Ascending aorta (tissue), 2 donors: ENCODE measurements at regions of chr10 and their contacts with region 1.

Region 1: DNA sequence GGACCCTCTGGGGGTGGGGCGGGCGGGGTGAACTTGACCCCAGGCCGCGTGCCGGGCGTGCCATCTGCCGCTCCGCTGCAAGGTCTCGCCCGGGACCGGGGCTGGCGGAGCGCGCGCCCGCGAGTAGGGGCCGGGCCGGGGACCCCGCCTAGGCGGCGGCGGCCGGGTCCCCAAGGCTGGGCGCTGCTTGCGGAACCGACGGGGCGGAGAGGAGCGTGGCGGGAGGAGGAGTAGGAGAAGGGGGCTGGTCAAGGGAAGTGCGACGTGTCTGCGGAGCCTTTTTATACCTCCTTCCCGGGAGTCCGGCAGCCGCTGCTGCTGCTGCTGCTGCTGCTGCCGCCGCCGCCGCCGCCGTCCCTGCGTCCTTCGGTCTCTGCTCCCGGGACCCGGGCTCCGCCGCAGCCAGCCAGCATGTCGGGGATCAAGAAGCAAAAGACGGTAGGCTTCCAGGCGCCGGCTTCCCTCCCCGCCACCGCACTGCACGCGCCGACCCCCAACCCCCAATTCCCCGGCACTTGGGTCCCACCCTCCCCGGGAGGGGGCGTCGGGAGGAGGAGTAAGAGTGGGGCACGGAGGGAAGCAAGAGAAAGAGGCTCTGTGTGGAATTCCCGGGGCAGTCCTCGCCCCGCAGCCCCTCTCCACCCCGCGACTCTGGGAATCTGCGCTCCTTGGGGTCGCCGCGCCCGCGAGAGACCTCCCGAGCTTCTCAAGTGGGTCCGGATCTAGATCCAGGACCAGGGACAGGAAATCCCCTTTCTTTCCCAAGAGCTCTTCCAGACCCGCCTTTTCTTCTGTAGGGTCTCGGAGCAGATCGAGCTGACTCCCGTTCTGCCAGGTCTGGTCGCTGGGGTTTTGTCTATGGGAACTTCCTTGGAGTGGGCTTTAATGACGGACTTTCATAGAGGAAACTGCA is at the start of gene PAPSS2:
- DNase-seq: peak in 1 of 2 donors; percentile 74
- H3K4me3 ChIP-seq: peak within 1 kb of the TSS; percentile 80 to 90
- H3K27ac ChIP-seq: peak within 1 kb of the TSS; percentile 68 to 69
- H3K4me1 ChIP-seq: peaks cover 0 to 7% of the 10 kb centered on the region in 2 donors
- H3K27me3 ChIP-seq: no peaks in the 10 kb centered on the region
- CTCF ChIP-seq: peak in 1 of 3 experiments; percentile 25
- total RNA-seq, gene PAPSS2: 14.8 TPM

Region 2: GRCh38 chr10:87538092-87539015 is 121.5 kb before region 1 on chr10:
- intact Hi-C with region 1: loop called (anchors 5 kb)
- DNase-seq: no peak
- H3K4me3 ChIP-seq: peak overlapping the region in 1 of 2 donors; percentile 18
- H3K27ac ChIP-seq: peak overlapping the region; percentile 45 to 50
- H3K4me1 ChIP-seq: peaks cover 0 to 11% of the 10 kb centered on the region in 2 donors
- H3K27me3 ChIP-seq: no peaks in the 10 kb centered on the region
- CTCF ChIP-seq: no peak

Region 3: GRCh38 chr10:87552248-87552929 is 107.4 kb before region 1 on chr10:
- intact Hi-C with region 1: loop called (anchors 5 kb)
- DNase-seq: no peak
- H3K4me3 ChIP-seq: no peak overlapping the region
- H3K27ac ChIP-seq: peak overlapping the region; percentile 20 to 24
- H3K4me1 ChIP-seq: peaks cover 0 to 11% of the 10 kb centered on the region in 2 donors
- H3K27me3 ChIP-seq: no peaks in the 10 kb centered on the region
- CTCF ChIP-seq: no peak

Region 4: GRCh38 chr10:87605628-87606308 is 54.1 kb before region 1 on chr10:
- intact Hi-C with region 1: loop called (anchors 5 kb)
- DNase-seq: no peak
- H3K4me3 ChIP-seq: no peak overlapping the region
- H3K27ac ChIP-seq: peak overlapping the region in 1 of 2 donors; percentile 38
- H3K4me1 ChIP-seq: no peaks in the 10 kb centered on the region
- H3K27me3 ChIP-seq: no peaks in the 10 kb centered on the region
- CTCF ChIP-seq: no peak

Region 5: DNA sequence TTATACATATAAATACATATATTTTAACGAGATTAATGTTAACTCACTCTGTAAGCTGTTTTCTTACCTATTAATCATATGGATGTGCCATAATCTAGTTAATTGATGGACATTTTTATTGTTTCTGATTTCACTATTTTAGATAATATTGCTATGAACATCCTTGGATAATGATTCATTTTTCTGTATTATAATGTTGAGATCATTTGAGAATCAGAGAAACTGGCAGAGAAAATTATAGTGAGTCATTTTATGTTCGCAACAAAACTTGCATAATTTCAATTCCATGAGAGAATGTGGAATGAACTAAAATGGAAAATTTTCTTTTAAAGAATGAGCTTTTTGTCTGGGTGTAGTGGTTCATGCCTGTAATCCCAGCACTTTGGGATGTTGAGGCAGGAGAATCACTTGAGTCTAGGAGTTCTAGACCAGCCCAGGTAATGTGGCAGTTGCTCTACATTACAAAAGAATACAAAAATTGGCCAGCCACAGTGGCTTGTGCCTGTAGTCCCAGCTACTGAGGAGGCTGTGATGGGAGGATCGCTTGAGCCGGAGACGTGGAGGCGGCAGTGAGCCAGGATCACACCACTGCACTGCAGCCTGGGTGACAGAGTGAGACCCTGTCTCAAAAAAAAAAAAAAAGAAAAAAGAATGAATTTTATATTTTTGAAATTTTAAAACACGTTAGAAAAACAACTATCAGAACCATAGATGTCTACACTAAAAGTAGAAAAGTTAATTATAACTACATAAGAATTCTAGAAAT is 40.4 kb after region 1 on chr10:
- intact Hi-C with region 1: loop called (anchors 5 kb)
- DNase-seq: no peak
- H3K4me3 ChIP-seq: no peak overlapping the region
- H3K27ac ChIP-seq: peak overlapping the region; percentile 25 to 41
- H3K4me1 ChIP-seq: no peaks in the 10 kb centered on the region
- H3K27me3 ChIP-seq: no peaks in the 10 kb centered on the region
- CTCF ChIP-seq: no peak

Region 6: DNA sequence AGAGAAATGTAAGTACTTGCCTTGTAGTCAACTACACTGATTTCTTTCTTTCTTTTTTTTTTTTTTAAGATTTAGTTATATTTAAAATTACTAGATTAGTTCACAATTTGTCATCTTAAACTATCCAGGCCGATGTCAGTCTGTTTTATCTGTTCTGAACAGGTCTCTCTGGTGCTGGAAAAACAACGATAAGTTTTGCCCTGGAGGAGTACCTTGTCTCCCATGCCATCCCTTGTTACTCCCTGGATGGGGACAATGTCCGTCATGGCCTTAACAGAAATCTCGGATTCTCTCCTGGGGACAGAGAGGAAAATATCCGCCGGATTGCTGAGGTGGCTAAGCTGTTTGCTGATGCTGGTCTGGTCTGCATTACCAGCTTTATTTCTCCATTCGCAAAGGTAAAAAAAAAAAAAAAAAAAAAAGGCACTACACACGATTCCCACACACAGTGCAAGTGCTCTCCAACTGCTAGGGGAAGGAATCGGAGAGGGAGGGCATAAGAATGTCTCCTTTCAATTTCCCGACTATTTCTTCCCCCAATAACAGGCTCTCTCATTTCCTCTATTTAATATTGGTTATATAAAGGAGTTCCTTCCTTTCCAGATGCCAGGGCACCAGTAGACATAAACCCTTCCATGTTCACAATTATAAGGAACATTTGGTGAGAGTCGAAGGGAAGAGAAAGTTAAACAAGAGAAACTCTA is 53.2 kb after region 1 on chr10:
- intact Hi-C with region 1: no loop called
- DNase-seq: no peak
- H3K4me3 ChIP-seq: no peak overlapping the region
- H3K27ac ChIP-seq: no peak overlapping the region
- H3K4me1 ChIP-seq: no peaks in the 10 kb centered on the region
- H3K27me3 ChIP-seq: no peaks in the 10 kb centered on the region
- CTCF ChIP-seq: no peak

Region 7: DNA sequence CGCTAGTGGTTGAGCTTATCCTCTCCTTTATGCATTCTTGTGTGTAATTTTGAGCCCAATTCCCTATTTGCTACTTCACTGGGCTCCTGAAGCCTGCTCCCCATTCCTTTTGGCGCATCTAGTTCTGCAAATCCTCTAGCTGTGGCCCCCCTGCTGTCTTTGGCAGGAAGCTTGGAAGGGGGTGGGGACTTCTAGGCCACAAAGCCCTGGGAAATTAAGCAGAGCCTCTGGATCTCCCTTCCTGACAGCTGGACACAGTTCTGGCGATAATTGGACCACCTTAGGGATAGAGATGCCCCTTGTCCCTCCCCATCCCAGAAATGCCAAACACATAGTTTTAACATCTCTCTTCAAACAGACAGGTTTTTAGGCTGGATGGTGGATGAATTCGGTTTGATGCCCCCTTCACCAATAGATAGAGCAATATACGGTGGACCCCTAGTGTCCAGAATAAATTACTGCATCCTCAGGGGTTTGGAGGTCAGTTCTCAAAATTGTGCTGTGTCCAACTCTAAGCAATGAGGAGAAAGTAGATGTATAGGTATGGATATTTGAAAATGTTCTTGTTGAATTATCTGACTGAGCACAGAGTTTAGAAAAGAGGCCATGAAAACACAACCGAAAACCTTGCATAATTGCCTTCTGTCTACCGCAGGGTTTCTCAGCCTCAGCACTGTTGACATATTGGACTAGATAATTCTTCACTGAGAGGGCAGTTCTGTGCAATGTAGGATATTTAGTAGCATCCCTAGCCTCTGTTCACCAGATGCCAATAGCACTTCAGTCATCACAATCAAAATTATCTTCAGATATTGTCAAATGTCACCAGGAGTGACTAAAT is 75.4 kb after region 1 on chr10:
- intact Hi-C with region 1: loop called (anchors 2 kb)
- DNase-seq: no peak
- H3K4me3 ChIP-seq: peak overlapping the region in 1 of 2 donors; percentile 23
- H3K27ac ChIP-seq: no peak overlapping the region
- H3K4me1 ChIP-seq: peaks cover 0 to 4% of the 10 kb centered on the region in 2 donors
- H3K27me3 ChIP-seq: no peaks in the 10 kb centered on the region
- CTCF ChIP-seq: peak; percentile 54 to 85 (median 82)

Region 8: GRCh38 chr10:87771871-87772500 is 112.2 kb after region 1 on chr10:
- intact Hi-C with region 1: loop called (anchors 5 kb)
- DNase-seq: no peak
- H3K4me3 ChIP-seq: no peak overlapping the region
- H3K27ac ChIP-seq: no peak overlapping the region
- H3K4me1 ChIP-seq: no peaks in the 10 kb centered on the region
- H3K27me3 ChIP-seq: no peaks in the 10 kb centered on the region
- CTCF ChIP-seq: peak; percentile 24 to 56 (median 35)

Region 9: DNA sequence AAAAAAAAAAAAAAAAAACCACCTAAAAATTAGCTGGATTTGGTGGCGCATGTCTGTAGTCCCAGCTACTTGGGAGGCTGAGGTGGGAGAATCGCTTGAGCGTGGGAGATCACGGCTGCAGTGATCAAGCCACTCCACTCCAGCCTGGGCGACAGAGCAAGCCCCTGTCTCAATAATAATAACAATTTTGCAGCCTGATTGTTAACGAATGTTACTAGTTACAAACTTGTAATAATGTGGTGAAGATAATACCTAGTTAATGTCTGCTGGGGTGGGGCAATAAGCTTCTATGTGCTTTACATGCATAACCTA is 159.4 kb after region 1 on chr10:
- intact Hi-C with region 1: no loop called
- DNase-seq: no peak
- H3K4me3 ChIP-seq: peak overlapping the region in 1 of 2 donors; percentile 70
- H3K27ac ChIP-seq: no peak overlapping the region
- H3K4me1 ChIP-seq: peaks cover 0 to 14% of the 10 kb centered on the region in 2 donors
- H3K27me3 ChIP-seq: no peaks in the 10 kb centered on the region
- CTCF ChIP-seq: no peak